AG04449 (cell line): ENCODE measurements at regions of chr2 and their contacts with region 1.

Region 1: GRCh38 chr2:237060534-237061312 is 25.0 kb upstream of the COPS8 start:
- DNase-seq: peak; percentile 16
- H3K4me3 ChIP-seq: no peak overlapping the region
- CTCF ChIP-seq: peak; percentile 61

Region 2: DNA sequence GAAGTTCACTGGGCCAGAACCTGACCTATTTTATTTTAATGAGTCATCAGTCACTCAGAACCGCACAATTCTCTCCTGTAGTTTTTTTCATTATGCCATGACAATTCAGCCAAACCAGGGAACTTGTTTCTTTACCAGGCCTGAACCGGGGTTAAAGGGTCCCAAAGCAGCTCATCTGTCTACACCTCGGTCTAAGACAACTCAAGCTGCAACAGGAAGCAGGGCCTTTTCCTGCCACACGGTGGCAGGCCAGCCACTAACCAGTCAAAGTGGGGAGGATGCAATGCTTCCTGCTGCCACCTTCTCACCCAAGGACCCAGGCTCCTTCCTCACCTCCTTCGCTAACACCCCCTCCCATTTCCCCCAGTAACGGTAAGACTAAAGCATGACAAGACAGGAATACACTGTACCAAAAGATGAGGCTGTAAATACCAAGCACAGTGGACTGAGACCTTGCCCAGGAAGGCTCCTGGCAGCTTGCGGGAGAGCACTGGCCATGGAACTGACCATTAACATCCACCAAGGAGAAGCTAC is 547.8 kb before region 1 on chr2:
- CTCF ChIA-PET with region 1: interaction called, 69 read pairs
- POLR2A ChIA-PET with region 1: no interaction called
- DNase-seq: no peak
- H3K4me3 ChIP-seq: no peak overlapping the region
- CTCF ChIP-seq: peak; percentile 80

Region 3: GRCh38 chr2:237045432-237045831 is 15.3 kb before region 1 on chr2:
- CTCF ChIA-PET with region 1: interaction called, 13 read pairs
- POLR2A ChIA-PET with region 1: no interaction called
- DNase-seq: no peak
- H3K4me3 ChIP-seq: no peak overlapping the region
- CTCF ChIP-seq: no peak

Region 4: DNA sequence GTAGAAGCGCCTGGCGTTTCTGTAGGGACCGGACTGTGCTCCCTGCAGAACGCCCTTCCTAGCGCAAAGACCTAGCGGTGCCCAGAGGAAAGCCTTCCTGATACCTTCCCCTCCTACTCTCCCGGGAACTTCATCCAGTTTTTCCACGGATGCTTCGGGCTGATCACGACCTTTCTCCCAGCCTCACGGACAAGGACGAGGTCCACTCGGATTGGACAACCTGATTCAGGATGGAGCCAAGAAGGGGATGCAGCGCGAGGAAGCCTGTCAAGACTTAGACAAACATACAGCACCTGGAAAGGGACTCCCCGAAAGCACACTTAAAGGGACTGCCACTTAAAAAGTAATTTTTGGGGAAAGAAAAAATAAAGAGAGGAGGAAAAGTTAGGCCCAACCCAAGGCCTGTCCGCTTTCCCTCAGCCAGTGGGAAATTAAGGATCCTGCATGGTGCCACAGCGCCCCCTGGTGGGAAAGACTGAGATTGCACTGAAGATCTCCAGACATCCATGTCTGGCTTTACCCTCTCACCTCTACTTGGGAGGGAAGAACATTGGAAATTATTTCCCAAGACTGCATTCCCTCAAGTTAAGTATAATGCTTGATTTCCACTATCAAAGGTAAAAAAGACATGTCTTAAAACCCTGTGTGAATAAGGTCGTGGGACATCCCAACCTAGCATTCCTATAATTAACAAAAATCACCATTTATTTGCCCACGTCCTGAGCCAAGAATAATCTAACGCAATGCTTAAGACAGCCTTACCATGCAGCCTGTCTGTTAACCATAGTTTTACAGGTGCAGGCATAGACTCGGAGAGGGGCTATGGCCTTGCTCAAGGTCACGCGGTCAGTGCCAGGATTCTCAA is 11.6 kb after region 1 on chr2:
- CTCF ChIA-PET with region 1: interaction called, 24 read pairs
- POLR2A ChIA-PET with region 1: no interaction called
- DNase-seq: no peak
- H3K4me3 ChIP-seq: no peak overlapping the region
- CTCF ChIP-seq: peak; percentile 86